ENCODE measurements at regions of chr9 and their contacts with region 1.

Region 1: GRCh38 chr9:107312376-107313050 is 29.4 kb downstream of the RAD23B start:
- DNase-seq: no peak

Region 2: GRCh38 chr9:107351382-107352045 is 39.0 kb after region 1 on chr9:
- intact Hi-C with region 1: no loop called
- DNase-seq: no peak

Region 3: GRCh38 chr9:107587191-107587963 is 274.9 kb after region 1 on chr9:
- intact Hi-C with region 1: no loop called
- DNase-seq: peak; percentile 82

Region 4: GRCh38 chr9:109072128-109072692 is 1759.7 kb after region 1 on chr9:
- intact Hi-C with region 1: loop called in 1 of 2 experiments (anchors 10 kb)
- DNase-seq: no peak